Activated CD4-positive, alpha-beta memory T cell treated with anti-CD3 and anti-CD28 coated beads, Interleukin-2, amount 10 ng/mL, durations not matched to agents 7 days and 5 days (primary cell): ENCODE measurements at regions of chr9 and their contacts with region 1.

Region 1: DNA sequence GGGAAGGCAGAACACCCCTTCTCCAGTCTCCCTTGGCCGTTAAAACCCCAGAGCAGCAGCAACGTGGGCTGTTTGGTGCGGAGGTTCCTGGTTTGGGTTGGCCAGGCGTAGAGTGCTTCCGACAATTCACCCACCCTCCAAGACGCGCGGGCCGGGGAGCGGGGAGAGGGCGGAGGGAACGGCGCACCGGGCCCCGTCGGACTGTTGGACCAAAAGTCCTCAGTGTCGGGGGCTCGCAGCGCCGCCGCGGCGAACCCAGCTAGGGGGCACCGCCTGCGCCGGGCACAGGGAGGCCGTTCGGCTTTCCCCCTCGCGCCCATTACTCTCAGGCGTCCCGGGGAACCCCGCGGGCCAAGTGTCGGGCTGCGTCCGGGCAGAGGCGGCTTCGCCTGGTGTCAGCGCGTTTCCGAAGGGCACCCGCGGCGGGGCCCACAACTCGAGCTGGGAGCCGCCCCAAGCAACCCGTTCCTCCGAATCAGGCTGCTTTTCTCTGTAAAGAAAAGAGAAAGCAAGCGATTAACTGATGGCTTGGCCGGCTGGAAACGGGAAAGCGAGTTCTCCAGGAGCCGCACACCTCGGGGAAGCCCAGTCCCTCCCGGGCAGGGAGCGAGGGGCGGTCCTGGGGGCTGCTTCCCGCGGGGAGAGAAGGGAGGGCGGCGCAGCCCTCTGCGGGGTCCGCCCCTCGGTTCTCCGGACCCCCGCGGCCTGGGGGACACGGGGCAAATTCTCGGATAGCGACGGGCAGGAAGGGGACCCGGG is 145.5 kb downstream of the ERCC6L2 start:
- DNase-seq: peak; percentile 69
- H3K4me3 Mint-ChIP-seq: peak overlapping the region; percentile 75
- H3K27ac Mint-ChIP-seq: peak overlapping the region; percentile 75
- H3K4me1 Mint-ChIP-seq: peaks cover 74% of the 10 kb centered on the region
- H3K27me3 Mint-ChIP-seq: peaks cover 34% of the 10 kb centered on the region

Region 2: DNA sequence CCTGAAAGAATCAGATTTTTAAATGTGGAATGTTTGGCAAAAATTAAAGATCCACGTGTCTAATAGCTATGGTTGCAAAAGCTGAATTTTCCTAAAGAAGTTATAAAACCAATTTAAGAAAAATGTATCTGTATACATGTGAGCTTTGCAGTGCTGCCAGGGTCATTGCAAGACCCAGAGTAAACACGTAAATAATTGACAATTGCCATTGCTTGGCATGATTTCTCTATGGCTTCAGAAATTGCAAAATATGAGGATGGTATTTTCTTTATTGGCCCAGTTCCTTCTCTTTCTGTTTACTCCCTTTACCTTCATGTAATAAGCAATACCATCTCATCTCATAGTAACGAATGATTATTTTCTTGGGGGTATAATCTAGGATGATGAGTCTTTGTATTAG is 21.6 kb before region 1 on chr9:
- CTCF ChIA-PET with region 1: no interaction called
- POLR2A ChIA-PET with region 1: no interaction called
- DNase-seq: no peak
- H3K4me3 Mint-ChIP-seq: no peak overlapping the region
- H3K27ac Mint-ChIP-seq: no peak overlapping the region
- H3K4me1 Mint-ChIP-seq: peaks cover 2% of the 10 kb centered on the region
- H3K27me3 Mint-ChIP-seq: no peaks in the 10 kb centered on the region

Region 3: DNA sequence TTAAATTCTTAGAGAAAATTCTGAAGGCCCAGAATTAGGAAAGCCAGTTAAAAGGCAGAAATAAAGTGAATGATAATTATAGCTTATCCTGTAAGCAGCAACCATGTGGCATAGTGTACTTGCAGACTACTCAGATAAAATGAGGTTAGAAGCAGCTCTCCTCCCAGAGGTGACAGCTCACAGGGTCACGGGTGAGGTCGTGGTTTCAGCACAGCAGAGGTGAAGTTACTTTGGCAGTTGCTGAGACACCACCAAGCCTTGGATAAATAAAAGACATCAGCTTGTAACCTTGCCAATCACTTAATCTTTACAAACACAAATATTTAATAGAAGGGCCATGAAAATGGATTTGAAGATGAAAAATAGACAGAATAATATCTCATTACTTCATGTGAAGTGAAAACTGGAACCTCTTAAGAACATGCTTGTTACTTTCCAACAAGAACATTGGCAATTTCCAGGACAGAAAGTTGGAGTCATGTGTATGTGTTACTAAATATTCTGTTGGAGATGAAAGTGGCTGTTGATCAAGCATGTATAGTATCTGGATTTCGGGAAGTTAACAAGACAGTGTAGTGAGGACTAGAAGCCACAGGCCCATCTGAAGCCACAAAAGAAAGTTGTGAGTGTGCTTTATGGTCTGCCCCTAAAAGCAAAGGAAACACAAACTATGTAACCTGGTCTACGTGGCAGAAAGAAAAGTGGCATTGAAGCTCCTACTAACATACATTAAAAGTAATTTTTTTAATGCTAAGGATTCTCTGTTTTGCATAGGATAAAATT is 11.1 kb before region 1 on chr9:
- CTCF ChIA-PET with region 1: no interaction called
- POLR2A ChIA-PET with region 1: interaction called, 30 read pairs
- DNase-seq: peak; percentile 83
- H3K4me3 Mint-ChIP-seq: no peak overlapping the region
- H3K27ac Mint-ChIP-seq: peak overlapping the region; percentile 81
- H3K4me1 Mint-ChIP-seq: peaks cover 50% of the 10 kb centered on the region
- H3K27me3 Mint-ChIP-seq: no peaks in the 10 kb centered on the region

Region 4: DNA sequence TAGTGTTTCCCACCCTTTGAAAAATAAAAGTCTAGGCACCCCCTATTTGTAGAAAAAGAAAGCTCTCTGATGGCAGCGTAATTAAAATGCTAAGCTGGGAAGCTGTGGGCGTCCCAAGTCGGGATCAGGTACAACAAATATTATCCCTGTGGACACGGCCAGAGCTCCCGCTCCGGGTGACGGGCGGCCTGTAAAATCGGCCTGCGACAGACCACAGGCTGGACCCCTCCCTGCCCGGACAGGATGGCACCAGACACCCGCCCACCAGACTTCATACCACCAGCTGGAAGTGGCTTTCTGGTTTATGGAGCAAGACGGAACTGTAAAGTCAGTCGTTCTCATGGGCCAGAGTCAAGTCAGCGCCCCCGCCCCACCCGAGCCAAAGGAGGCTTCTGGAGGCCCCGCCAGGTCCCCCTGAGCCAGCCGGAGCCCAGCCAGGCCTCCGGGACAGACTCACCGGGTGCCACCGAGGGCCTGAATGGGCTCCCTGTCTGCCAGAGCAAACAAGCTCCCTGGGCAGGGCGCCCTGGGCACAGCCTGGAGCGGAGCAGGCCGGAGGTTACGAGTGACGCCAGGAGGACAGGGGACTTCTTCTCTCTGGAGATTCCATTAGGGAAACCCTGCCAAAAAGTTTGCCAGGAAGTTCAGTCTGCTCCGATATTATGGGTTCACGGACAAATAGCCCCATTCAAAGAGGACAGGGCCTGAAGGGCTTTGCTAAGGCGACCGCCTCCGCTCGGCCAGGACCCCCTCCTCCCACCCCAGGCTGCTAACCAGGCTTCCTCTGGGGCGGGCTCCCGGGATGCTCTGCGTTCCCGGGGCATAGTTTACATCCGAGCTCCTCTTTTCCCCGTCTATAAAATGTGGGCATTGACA is 28.2 kb after region 1 on chr9:
- CTCF ChIA-PET with region 1: no interaction called
- POLR2A ChIA-PET with region 1: no interaction called
- DNase-seq: no peak
- H3K4me3 Mint-ChIP-seq: no peak overlapping the region
- H3K27ac Mint-ChIP-seq: no peak overlapping the region
- H3K4me1 Mint-ChIP-seq: no peaks in the 10 kb centered on the region
- H3K27me3 Mint-ChIP-seq: peaks cover 3% of the 10 kb centered on the region

Region 5: DNA sequence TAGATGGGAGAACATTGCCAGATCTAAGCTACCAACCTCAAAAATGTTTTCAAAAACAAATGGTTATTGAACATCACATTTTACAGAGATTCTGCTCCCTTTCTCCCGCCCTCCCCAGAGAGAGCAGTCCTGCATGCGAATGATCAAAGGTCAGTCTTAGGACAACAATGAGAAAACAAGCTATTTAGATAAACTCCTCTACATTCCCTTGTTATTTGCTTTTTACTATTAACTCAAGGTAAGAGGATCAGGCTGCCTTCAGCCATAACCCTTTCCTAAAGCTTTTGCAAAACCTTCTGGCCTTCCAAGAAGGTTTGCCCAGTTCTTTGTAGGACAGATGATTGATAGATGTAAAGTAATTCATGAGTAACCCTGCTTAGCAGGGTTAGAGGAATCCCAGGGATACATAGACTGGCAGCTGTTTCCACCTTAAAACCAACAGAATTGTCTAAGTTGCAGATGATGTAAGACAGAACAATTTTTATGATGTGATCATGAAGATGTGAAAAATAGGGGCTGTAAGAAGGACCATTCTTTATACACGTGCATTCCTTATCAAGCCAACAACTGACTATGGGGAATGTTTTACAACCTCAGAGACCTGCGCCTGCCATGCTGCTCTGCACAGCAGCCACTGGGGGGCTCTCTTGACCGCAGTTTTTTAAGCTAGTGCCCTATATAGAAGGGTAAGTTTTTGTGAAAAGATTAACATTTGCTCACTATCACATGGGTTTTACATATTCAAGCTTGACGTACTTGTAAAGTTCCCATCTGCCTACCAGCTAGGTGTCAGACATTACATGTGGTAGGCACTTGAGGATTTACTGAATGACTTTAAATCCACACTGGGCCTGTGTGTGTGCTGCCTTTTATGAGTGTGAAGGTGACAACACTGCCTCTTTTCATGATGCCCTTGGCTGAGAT is 835.7 kb after region 1 on chr9:
- CTCF ChIA-PET with region 1: no interaction called
- POLR2A ChIA-PET with region 1: no interaction called
- DNase-seq: peak; percentile 72
- H3K4me3 Mint-ChIP-seq: no peak overlapping the region
- H3K27ac Mint-ChIP-seq: no peak overlapping the region
- H3K4me1 Mint-ChIP-seq: peaks cover 31% of the 10 kb centered on the region
- H3K27me3 Mint-ChIP-seq: peaks cover 17% of the 10 kb centered on the region